ENCODE measurements at regions of chr10 and their contacts with region 1.

Region 1: GRCh38 chr10:102596506-102596971 is 47.7 kb upstream of the TRIM8 start:
- DNase-seq: peak; percentile 80
- CTCF ChIP-seq: peak; percentile 81

Region 2: GRCh38 chr10:102565793-102566192 is 30.7 kb before region 1 on chr10:
- CTCF ChIA-PET with region 1: interaction called, 10 read pairs
- POLR2A ChIA-PET with region 1: no interaction called
- DNase-seq: no peak
- CTCF ChIP-seq: peak; percentile 7

Region 3: DNA sequence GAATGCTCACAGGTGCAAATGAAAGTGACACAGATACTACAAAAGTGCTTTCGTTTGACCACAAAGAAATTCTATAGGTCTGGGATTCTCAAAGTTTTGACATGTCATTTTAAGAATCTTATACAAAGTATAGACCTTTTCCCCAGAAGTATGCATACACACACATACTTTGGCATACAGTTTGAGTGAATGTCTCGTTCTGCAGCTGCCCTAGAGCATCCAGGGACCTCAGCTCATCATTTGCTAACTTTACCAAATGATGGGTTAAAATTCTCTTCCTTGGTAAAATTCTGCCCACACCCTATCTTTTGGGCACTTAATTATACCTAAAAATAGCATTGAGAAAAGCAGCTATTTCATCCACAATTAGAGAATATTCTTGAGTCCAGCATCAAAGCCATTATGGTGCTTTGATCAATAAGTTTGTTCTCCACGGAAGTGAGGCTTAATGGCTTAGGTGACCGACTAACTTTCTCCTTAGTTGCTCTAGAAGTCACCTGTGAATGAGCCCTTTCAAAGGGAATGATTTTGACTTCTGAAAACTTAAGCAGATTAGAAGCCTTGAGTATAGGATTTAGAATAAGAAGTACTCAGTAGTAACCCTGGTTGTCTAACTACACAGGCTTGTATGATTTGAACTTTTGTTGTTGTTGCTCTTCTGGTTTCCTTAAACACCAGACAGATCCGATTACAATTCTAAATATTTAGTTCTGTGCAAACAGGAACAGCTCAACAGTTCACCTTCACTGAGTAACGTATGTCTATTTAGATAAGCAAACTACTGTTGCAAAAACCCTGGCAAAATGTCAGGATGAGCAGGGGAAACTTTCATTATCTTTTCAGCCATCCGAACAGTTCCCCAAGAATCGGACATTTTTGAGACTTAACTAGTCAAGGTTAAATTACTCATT is 392.1 kb after region 1 on chr10:
- CTCF ChIA-PET with region 1: no interaction called
- POLR2A ChIA-PET with region 1: no interaction called
- DNase-seq: no peak
- CTCF ChIP-seq: no peak

Measured in GM10248 (cell line).